ENCODE measurements at regions of chr18 and their contacts with region 1.

Region 1: GRCh38 chr18:45802608-45803492 is 22.6 kb upstream of the SIGLEC15 start:
- DNase-seq: peak; percentile 87
- ATAC-seq: peak; percentile 86
- H3K4me3 ChIP-seq: peak overlapping the region; percentile 21; the same call in 1 of the 2 replicates
- H3K27ac ChIP-seq: peak overlapping the region; percentile 100
- H3K4me1 ChIP-seq: peaks cover 20% of the 10 kb centered on the region
- H3K27me3 ChIP-seq: no peaks in the 10 kb centered on the region
- CTCF ChIP-seq: no peak

Region 2: GRCh38 chr18:45702866-45703265 is 100.0 kb before region 1 on chr18:
- CTCF ChIA-PET with region 1: no interaction called
- POLR2A ChIA-PET with region 1: no interaction called
- intact Hi-C with region 1: no loop called
- DNase-seq: no peak
- ATAC-seq: no peak
- H3K4me3 ChIP-seq: no peak overlapping the region
- H3K27ac ChIP-seq: no peak overlapping the region
- H3K4me1 ChIP-seq: no peaks in the 10 kb centered on the region
- H3K27me3 ChIP-seq: no peaks in the 10 kb centered on the region
- CTCF ChIP-seq: no peak

Region 3: DNA sequence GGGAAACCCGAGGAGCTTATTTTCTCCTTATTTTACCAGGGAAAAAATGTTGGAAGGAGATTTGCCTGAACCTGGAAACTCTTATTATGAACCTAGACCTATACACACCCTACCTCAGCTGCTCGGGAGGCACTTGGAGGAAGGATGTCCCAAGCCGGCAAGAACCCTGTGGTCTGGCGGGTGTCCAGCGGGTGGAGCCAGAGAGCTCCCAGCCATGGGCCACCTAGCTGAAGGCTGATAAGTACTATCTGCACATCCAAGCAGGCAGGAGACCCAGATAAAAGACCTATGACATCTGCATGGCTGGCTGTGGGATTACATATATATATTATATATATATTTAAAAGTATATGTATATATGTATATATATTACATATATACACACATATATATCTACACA is 80.0 kb before region 1 on chr18:
- CTCF ChIA-PET with region 1: no interaction called
- POLR2A ChIA-PET with region 1: interaction called, 4 read pairs
- intact Hi-C with region 1: loop called (anchors 2 kb)
- DNase-seq: peak; percentile 64
- ATAC-seq: peak; percentile 92
- H3K4me3 ChIP-seq: no peak overlapping the region
- H3K27ac ChIP-seq: no peak overlapping the region
- H3K4me1 ChIP-seq: peaks cover 7% of the 10 kb centered on the region; the same call in 1 of the 2 replicates
- H3K27me3 ChIP-seq: no peaks in the 10 kb centered on the region
- CTCF ChIP-seq: peak; percentile 53

Region 4: DNA sequence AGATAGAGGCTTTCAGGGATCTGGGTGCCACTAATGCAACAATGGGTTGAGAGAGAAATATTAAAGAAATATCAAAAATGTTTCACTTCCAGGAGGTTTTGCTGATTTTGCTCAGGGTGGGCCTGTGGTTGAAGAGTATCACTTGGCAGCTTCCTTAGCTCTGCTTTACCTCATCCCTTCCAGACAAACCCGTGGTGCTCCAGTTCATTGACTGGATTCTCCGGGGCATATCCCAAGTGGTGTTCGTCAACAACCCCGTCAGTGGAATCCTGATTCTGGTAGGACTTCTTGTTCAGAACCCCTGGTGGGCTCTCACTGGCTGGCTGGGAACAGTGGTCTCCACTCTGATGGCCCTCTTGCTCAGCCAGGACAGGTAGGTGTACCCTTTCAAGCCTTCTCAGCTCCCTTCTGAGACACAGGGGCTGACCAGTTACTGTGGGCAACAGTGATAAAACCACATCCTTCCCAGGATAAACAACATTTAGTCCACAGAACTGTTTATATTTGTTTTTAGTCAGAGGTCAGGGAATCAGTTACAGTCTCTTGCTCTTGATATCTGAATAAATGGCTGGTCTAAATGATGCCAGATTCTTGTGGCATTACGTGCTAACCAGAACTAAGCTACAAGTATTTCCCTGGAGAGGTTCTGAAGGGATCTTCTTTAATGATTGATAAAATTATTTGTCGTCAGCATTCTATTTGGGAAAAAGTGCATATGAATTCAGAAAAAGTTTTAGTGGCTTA is 71.8 kb before region 1 on chr18:
- CTCF ChIA-PET with region 1: no interaction called
- POLR2A ChIA-PET with region 1: no interaction called
- intact Hi-C with region 1: loop called (anchors 2 kb)
- DNase-seq: peak; percentile 61
- ATAC-seq: peak; percentile 95
- H3K4me3 ChIP-seq: no peak overlapping the region
- H3K27ac ChIP-seq: peak overlapping the region; percentile 44
- H3K4me1 ChIP-seq: peaks cover 18% of the 10 kb centered on the region
- H3K27me3 ChIP-seq: no peaks in the 10 kb centered on the region
- CTCF ChIP-seq: no peak

Region 5: GRCh38 chr18:45749918-45750689 is 52.7 kb before region 1 on chr18:
- CTCF ChIA-PET with region 1: no interaction called
- POLR2A ChIA-PET with region 1: interaction called, 6 read pairs
- intact Hi-C with region 1: loop called (anchors 2 kb)
- DNase-seq: peak; percentile 27
- ATAC-seq: peak; percentile 70
- H3K4me3 ChIP-seq: no peak overlapping the region
- H3K27ac ChIP-seq: peak overlapping the region; percentile 61
- H3K4me1 ChIP-seq: peaks cover 12% of the 10 kb centered on the region
- H3K27me3 ChIP-seq: no peaks in the 10 kb centered on the region
- CTCF ChIP-seq: no peak

Region 6: DNA sequence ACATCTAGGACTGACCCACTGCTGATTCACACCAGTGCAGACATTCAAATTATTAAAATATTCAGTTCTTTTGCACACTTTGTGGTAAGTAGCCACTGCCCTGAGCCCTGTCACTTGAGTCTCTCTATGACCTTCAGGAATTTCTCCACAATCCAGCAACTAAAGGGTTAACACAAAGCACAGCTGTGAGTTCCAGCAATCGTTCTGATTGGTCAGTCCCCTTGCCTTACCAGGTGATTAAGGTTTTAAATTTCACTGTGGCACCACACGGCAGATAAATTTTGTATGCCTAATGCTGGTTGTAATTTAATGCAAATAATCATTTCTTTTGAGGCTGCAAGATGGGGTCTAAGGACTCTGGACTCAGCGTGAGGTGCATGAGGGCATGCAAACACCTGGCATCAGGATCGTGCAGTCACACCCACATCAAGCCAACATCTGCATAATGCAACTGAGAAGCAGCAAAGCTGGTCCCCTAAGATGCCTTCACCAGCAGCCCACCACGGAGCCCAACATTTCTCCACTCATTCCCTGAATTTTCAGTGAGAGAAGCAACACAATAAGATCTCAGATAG is 42.3 kb before region 1 on chr18:
- CTCF ChIA-PET with region 1: no interaction called
- POLR2A ChIA-PET with region 1: no interaction called
- intact Hi-C with region 1: no loop called
- DNase-seq: no peak
- ATAC-seq: no peak
- H3K4me3 ChIP-seq: no peak overlapping the region
- H3K27ac ChIP-seq: no peak overlapping the region
- H3K4me1 ChIP-seq: peaks cover 18% of the 10 kb centered on the region
- H3K27me3 ChIP-seq: no peaks in the 10 kb centered on the region
- CTCF ChIP-seq: no peak

Region 7: DNA sequence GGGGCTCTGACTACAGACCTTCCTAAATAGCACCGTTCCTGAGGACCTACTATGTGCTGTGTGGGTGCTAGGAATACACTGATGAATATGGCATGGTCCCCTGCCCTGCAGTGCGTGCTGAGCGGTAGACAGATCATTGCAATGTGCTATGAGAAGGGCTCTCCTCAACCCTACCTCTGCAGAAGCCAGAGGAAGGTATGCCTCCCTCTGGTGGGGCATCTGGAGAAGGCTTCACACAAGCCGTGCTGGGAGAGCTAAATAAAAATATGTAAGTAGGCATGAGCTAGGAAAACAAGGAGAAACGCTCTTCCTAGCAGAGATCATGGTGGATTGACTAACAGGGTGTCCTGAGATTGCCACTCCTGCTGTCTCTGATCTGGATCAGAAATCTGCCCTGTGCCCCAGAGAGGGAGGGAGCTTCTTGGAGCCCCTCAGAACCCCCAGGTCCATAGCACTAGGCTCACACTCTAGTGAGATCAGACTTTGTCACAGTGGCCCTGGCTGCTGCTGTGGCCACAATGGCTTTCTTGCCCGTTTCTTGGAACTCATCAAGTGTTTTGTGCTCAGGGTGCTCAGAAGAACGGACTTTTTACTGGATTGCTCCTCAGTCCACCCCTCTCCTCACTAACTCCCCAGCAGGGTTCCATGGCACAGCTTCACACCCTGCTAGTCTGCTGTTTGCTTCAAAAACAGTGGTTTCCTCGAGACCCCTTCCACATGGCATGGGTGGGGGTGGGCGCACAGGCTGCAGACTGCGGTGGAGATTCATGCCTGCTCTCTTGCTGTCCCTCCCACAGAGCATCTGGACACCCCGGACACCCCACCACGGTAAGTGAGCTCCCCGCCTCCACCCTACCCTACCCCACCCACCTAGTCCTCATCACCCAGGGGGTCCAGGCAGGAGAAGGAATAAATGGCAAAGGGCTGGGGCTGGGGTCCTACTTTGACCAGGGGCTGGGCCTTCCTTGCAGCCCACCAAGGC is 36.9 kb after region 1 on chr18:
- CTCF ChIA-PET with region 1: interaction called, 5 read pairs
- POLR2A ChIA-PET with region 1: no interaction called
- intact Hi-C with region 1: loop called (anchors 2 kb)
- DNase-seq: peak; percentile 62
- ATAC-seq: peak; percentile 89
- H3K4me3 ChIP-seq: no peak overlapping the region
- H3K27ac ChIP-seq: no peak overlapping the region
- H3K4me1 ChIP-seq: peaks cover 5% of the 10 kb centered on the region; the same call in 1 of the 2 replicates
- H3K27me3 ChIP-seq: no peaks in the 10 kb centered on the region
- CTCF ChIP-seq: peak; percentile 61

Region 8: DNA sequence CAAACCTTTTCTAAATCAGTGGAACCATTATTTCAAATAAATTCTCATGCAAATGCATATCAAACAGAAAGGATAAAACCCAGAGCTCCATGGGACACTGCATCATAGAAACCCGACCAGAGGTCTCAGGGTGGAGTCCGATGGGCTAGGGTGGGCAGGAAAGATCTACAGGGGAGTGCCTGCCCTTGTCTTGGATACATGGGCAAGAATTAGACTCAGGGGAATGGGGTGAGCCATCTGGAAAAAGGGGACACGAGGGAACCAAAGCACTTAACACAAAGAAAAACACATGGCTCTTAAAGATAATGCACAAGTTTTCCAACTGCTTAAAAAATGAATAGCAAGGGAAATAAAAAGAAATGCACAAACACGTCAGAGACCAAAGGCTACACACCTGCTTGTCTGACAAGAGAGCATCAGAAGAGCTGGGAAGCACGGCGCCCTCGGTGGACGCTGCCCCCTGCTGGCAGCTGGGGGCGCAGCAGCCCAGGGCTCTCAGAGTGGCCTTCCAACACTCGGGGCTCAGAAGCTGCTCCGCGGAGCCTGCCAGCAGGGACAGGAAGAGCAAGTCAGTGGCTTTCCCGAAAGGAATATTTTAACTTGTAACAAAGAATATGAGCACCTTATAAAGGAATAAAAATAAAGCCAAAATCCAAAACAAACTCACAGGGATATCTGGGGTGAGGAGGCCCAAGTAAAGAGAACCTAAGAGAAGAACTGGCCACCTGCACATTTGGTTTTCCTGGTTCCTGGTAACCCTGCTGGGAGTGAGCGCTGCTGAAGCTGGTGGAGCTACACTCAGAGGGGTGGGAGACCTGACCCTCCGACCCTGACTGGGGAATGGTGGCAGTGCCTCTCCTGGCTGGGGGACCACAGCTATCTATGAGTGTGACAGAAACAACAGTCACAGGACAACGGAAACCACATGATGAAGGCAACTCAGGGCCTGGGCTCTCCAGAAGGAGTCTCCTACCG is 77.1 kb after region 1 on chr18:
- CTCF ChIA-PET with region 1: no interaction called
- POLR2A ChIA-PET with region 1: no interaction called
- intact Hi-C with region 1: loop called (anchors 2 kb)
- DNase-seq: peak; percentile 67
- ATAC-seq: peak; percentile 89
- H3K4me3 ChIP-seq: no peak overlapping the region
- H3K27ac ChIP-seq: no peak overlapping the region
- H3K4me1 ChIP-seq: no peaks in the 10 kb centered on the region
- H3K27me3 ChIP-seq: no peaks in the 10 kb centered on the region
- CTCF ChIP-seq: peak; percentile 79